ENCODE measurements at regions of chr11 and their contacts with region 1.

Region 1: DNA sequence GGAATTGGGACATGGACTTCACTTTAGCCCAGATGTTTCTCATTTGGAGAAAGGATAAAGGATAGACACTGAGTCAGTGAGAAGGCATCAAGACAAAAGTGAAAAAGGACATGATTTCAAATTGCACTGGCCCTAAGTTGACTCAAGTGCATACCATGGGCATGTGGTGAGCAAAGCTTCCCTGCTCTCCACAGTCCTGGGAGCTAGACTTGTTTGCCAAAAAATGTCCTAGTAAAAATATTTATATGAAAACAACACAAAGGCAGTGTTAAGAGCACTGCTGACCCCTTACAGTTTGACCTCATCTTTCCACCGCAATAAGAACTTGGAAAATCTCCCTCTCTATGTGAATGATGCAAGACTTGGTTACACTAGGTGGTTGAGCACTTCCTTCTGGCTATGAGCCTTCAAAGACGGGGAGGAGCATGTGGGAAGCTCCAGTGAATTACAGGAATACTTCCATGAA is 46.5 kb upstream of the FIBIN start:
- DNase-seq: peak; percentile 100
- ATAC-seq: peak; percentile 91
- H3K4me3 ChIP-seq: no peak overlapping the region
- H3K27ac ChIP-seq: no peak overlapping the region
- H3K4me1 ChIP-seq: peaks cover 21% of the 10 kb centered on the region
- H3K27me3 ChIP-seq: no peaks in the 10 kb centered on the region
- CTCF ChIP-seq: no peak
- POLR2A ChIP-seq: no peak
- RAD21 ChIP-seq: peak; percentile 13

Region 2: GRCh38 chr11:26839911-26840698 is 107.3 kb before region 1 on chr11:
- CTCF ChIA-PET with region 1: no interaction called
- POLR2A ChIA-PET with region 1: no interaction called
- dilution Hi-C with region 1: no loop called
- in situ Hi-C with region 1: no loop called
- intact Hi-C with region 1: no loop called
- DNase-seq: no peak
- ATAC-seq: no peak
- H3K4me3 ChIP-seq: no peak overlapping the region
- H3K27ac ChIP-seq: no peak overlapping the region
- H3K4me1 ChIP-seq: peaks cover 7% of the 10 kb centered on the region
- H3K27me3 ChIP-seq: no peaks in the 10 kb centered on the region
- CTCF ChIP-seq: no peak
- POLR2A ChIP-seq: no peak
- RAD21 ChIP-seq: no peak

Region 3: GRCh38 chr11:26931248-26931631 is 16.2 kb before region 1 on chr11:
- CTCF ChIA-PET with region 1: interaction called, 3 read pairs
- POLR2A ChIA-PET with region 1: no interaction called
- dilution Hi-C with region 1: no loop called
- in situ Hi-C with region 1: no loop called
- intact Hi-C with region 1: loop called (anchors 2 kb)
- DNase-seq: peak; percentile 30
- ATAC-seq: no peak
- H3K4me3 ChIP-seq: no peak overlapping the region
- H3K27ac ChIP-seq: peak overlapping the region; percentile 28; the same call in 1 of the 2 replicates
- H3K4me1 ChIP-seq: peaks cover 4% of the 10 kb centered on the region; the same call in 1 of the 2 replicates
- H3K27me3 ChIP-seq: peaks cover 2% of the 10 kb centered on the region; the same call in 1 of the 2 replicates
- CTCF ChIP-seq: no peak
- POLR2A ChIP-seq: no peak
- RAD21 ChIP-seq: no peak